G401 (cell line): ENCODE measurements at regions of chr20 and their contacts with region 1.

Region 1: GRCh38 chr20:62292108-62292507 is 10.7 kb upstream of the ADRM1 start:
- DNase-seq: no peak

Region 2: GRCh38 chr20:62182613-62183425 is 109.3 kb before region 1 on chr20 and contains the start of gene MTG2:
- in situ Hi-C with region 1: loop called (anchors 10 kb)
- DNase-seq: peak; percentile 94
- total RNA-seq, gene MTG2: 30.6 and 48.2 TPM in 2 replicates

Region 3: DNA sequence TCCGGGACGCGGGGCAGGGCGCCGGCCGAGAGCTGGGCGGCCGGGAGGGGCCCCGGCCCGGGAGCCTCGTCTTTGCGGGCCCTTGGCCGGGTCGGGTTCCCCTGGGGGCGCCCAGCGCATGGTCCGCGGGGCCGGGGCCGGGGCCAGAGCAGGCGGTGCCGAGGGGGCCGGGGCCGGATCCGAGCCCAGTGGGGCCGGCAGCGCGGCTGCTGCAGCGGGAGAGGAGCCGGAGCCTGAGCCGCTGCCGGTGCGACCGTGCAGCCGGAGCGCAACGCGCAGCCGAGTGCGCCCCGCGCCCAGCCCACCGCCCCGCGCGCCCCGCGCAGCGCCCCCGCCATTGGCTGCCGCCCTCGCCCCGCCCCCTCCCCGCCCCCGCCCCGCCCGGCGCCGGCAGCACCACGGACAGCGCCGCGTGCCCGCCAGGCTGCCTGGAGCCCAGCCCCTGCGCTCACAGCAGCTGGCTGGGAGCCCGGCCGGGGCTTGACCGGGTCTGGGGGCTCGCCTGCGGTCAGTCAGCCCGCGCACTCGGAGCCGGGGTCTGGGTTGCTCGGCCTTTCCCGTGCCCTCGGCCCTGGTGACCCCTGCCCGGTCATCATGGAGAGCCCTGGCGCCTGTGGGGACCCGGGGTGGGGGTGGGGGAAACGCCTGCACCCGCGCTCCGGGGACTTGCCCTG is 72.0 kb before region 1 on chr20 and contains the start of gene HRH3:
- in situ Hi-C with region 1: no loop called
- DNase-seq: peak; percentile 37
- total RNA-seq, gene HRH3: not detected in 2 replicates

Region 4: GRCh38 chr20:62321521-62321948 is 29.4 kb after region 1 on chr20:
- in situ Hi-C with region 1: no loop called
- DNase-seq: no peak

Region 5: GRCh38 chr20:62549499-62550086 is 257.5 kb after region 1 on chr20:
- in situ Hi-C with region 1: loop called (anchors 10 kb)
- DNase-seq: no peak